ENCODE measurements at regions of chr2 and their contacts with region 1.

Region 1: DNA sequence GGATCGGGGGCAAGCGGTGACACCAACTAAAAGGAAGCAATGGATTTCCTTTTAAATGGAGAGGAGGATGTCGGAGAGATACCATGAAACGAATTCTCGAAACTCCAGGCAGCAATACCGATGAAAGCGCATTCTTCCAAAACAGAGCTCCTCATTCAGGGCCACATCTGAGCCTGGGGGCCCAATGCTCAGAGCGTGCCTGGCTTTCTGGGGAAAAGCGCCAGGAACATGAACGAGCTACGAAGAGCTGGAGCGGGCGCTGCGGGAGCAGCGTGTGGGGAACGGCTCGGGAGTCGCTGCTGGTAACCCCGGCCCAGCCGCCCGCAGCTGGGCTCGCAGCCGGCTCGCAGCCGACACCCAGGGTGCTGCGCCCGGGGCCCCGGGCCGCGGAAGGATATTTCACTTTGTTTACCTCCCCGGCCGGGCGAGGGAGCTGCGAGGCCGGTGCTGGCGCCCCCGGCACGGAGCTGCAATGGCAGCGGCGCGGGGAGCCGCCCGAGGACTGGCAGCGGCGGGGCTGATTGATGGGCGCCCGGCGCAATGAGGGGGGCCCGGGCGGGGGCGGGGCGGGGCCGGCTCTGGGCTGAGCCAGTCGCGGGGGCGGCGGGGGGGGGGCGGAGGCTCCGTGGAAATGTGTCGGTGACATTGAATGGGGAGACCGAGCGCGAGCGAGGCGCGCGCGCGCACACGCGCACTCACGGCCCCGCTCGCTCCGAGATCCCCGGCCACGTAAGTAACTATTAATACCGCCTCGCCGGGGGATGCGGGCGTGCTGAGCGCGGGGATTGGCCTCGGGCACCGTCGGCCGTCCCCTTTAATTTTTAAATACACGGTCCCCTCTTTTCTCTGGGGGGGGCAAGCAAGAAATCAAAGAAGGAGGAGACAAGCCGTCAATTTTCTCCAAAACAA is at the start of gene TRIB2:
- DNase-seq: peak; percentile 89
- H3K4me3 Mint-ChIP-seq: peak within 1 kb of the TSS; percentile 95
- H3K27ac Mint-ChIP-seq: peak within 1 kb of the TSS; percentile 94
- H3K4me1 Mint-ChIP-seq: peaks cover 45% of the 10 kb centered on the region
- H3K27me3 Mint-ChIP-seq: peaks cover 12% of the 10 kb centered on the region
- total RNA-seq, gene TRIB2: 85.4 to 96.5 TPM

Region 2: DNA sequence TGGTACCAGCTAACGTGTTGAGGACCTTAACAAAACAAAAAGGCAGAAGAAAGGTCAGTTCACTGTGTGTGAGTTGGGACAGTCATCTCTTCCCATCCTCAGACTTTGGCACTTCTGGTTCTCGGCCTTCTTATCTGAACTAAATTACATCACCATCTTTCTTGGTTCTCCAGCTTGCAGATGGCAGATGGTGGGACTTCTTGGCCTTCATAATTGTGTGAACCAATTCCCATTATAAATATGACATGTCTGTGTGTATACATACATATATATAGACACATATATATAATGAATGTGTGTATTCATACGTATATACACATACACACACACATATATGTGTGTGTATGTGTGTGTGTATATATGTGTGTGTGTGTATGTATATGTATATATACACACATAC is 301.0 kb before region 1 on chr2:
- CTCF ChIA-PET with region 1: interaction called, 15 read pairs
- POLR2A ChIA-PET with region 1: no interaction called
- DNase-seq: no peak
- H3K4me3 Mint-ChIP-seq: no peak overlapping the region
- H3K27ac Mint-ChIP-seq: no peak overlapping the region
- H3K4me1 Mint-ChIP-seq: peaks cover 70% of the 10 kb centered on the region
- H3K27me3 Mint-ChIP-seq: no peaks in the 10 kb centered on the region

Region 3: GRCh38 chr2:12728221-12728777 is 11.8 kb after region 1 on chr2:
- CTCF ChIA-PET with region 1: interaction called, 13 read pairs
- POLR2A ChIA-PET with region 1: interaction called, 6 read pairs
- DNase-seq: peak; percentile 86
- H3K4me3 Mint-ChIP-seq: peak overlapping the region; percentile 51
- H3K27ac Mint-ChIP-seq: peak overlapping the region; percentile 90
- H3K4me1 Mint-ChIP-seq: peaks cover 90% of the 10 kb centered on the region
- H3K27me3 Mint-ChIP-seq: no peaks in the 10 kb centered on the region

Measured in activated CD4-positive, alpha-beta T cell treated with anti-CD3 and anti-CD28 coated beads, Interleukin-2, amount 10 ng/mL, durations not matched to agents 7 days and 5 days (primary cell).